ENCODE measurements at regions of chr10 and their contacts with region 1.

Region 1: GRCh38 chr10:110279407-110279986 is 25.2 kb downstream of the SMNDC1 start:
- DNase-seq: peak; percentile 28
- ATAC-seq: peak; percentile 75
- H3K4me3 ChIP-seq: no peak overlapping the region
- H3K27ac ChIP-seq: no peak overlapping the region
- H3K4me1 ChIP-seq: no peaks in the 10 kb centered on the region
- H3K27me3 ChIP-seq: no peaks in the 10 kb centered on the region
- CTCF ChIP-seq: peak; percentile 65 to 77 (median 68); a peak in 5 of 6 replicates
- EP300 ChIP-seq: no peak
- POLR2A ChIP-seq: no peak
- RAD21 ChIP-seq: peak; percentile 87

Region 2: DNA sequence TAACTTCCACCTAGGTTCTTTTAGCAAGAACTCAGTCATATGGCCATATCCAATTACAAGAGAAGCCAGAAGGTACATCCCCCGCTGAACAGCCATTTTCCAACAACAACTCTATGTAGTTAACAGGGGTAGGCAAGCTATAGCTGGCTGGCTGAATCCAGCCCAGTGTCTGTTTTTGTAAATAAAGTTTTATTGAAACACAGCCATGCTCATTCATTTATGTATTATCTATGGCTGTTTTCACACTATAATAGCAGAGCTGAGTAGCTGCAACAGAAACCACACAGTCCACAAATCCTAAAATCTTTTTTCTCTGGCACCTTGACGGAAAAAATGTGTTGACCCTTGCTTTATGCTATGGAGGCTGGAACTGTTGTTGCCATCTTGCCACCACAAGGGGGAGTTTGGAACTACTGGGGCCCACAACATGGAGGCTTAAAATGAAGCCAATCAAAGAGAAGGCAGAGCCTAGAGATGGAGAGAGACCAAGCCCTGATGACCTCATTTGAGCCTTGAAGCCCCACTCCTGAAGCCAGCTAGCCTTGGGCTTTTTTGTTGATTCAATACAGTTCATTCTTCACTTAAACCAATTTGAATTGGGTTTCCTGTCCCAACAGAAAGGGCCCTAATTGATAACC is 322.9 kb before region 1 on chr10:
- CTCF ChIA-PET with region 1: interaction called, 5 read pairs
- POLR2A ChIA-PET with region 1: no interaction called
- RAD21 ChIA-PET with region 1: no interaction called
- SMC1A ChIA-PET with region 1: interaction called, 3 read pairs
- in situ Hi-C with region 1: no loop called
- intact Hi-C with region 1: loop called (anchors 10 kb)
- DNase-seq: no peak
- ATAC-seq: peak; percentile 87
- H3K4me3 ChIP-seq: no peak overlapping the region
- H3K27ac ChIP-seq: peak overlapping the region; percentile 55
- H3K4me1 ChIP-seq: peaks cover 23% of the 10 kb centered on the region
- H3K27me3 ChIP-seq: no peaks in the 10 kb centered on the region
- CTCF ChIP-seq: peak; percentile 57 to 76 (median 67)
- EP300 ChIP-seq: no peak
- POLR2A ChIP-seq: no peak
- RAD21 ChIP-seq: peak; percentile 58

Region 3: GRCh38 chr10:110144507-110144906 is 135.0 kb before region 1 on chr10:
- CTCF ChIA-PET with region 1: interaction called, 105 read pairs
- POLR2A ChIA-PET with region 1: no interaction called
- RAD21 ChIA-PET with region 1: interaction called, 42 read pairs
- SMC1A ChIA-PET with region 1: interaction called, 14 read pairs
- in situ Hi-C with region 1: loop called (anchors 5 kb)
- intact Hi-C with region 1: no loop called
- DNase-seq: no peak
- ATAC-seq: no peak
- H3K4me3 ChIP-seq: no peak overlapping the region
- H3K27ac ChIP-seq: no peak overlapping the region
- H3K4me1 ChIP-seq: no peaks in the 10 kb centered on the region
- H3K27me3 ChIP-seq: peaks cover 0 to 1% of the 10 kb centered on the region in 2 experiments; a peak in 3 of 4 replicates
- CTCF ChIP-seq: no peak
- EP300 ChIP-seq: no peak
- POLR2A ChIP-seq: no peak
- RAD21 ChIP-seq: no peak

Region 4: DNA sequence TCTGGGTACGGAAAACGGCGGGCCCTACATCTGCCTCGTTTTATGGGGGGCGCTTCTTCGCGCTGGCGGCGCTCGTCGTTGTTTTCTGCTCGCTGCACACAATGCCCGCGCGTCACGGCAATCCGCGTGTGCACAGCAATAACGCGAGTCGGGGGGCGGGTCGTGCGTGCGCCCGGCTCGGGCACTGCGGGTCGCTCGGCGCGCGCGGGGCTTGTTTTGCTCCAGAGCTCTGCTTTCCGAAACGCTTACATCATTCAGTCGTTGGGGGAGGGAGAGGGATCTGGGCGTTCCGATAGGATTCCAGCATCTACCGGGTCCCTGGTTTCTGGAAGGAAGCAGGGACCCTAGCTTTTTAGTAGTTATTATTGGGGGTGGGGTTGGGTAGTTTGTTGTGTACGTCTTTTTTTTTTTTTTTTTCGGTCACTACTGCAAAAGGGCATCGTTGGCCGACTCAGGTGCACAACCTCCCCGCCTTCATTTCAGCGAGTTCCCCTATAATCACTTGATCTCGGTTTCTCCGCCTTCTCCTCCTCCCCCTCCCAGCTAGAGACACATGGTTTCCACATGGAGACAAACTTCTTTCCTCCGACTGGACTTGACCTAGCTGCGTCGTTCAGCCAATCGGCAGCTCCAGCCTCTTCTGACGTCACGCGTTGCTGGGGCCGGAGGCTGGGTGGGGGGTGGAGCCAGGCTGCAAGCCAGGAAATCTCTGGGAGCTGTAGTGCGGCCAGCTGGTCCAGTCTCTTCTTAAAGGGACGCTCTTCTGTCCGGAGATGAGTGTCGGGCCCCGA is 68.6 kb before region 1 on chr10:
- CTCF ChIA-PET with region 1: interaction called, 20 read pairs
- POLR2A ChIA-PET with region 1: interaction called, 6 read pairs
- RAD21 ChIA-PET with region 1: interaction called, 34 read pairs
- SMC1A ChIA-PET with region 1: interaction called, 19 read pairs
- in situ Hi-C with region 1: no loop called
- intact Hi-C with region 1: loop called (anchors 2 kb)
- DNase-seq: peak; percentile 90
- ATAC-seq: peak; percentile 87
- H3K4me3 ChIP-seq: peak overlapping the region; percentile 73
- H3K27ac ChIP-seq: no peak overlapping the region
- H3K4me1 ChIP-seq: peaks cover 22% of the 10 kb centered on the region
- H3K27me3 ChIP-seq: peaks cover 4 to 7% of the 10 kb centered on the region in 2 experiments; a peak in 3 of 4 replicates
- CTCF ChIP-seq: no peak
- EP300 ChIP-seq: peak in 1 of 2 experiments; percentile 46; a peak in 1 of 4 replicates
- POLR2A ChIP-seq: peak; percentile 65
- RAD21 ChIP-seq: no peak

Region 5: DNA sequence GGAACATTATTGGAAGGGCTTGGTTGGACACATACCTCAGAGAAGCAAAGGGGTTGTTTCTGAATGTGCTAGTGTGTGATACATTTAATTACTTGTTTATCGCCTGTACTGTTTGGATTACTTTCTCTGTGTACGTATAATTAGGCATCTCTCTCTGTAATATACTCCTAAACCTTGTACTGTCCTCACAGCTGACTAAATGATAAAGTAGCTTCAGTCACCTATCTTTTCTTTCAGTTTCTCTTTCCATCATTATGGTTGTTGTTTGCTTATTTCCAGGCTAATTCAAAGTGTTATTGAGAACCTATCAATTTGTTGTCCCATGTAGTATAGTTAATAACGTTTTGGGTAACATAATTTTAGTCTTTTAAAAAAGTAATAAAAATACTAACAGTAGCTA is 38.1 kb before region 1 on chr10:
- CTCF ChIA-PET with region 1: interaction called, 12 read pairs
- POLR2A ChIA-PET with region 1: no interaction called
- RAD21 ChIA-PET with region 1: no interaction called
- SMC1A ChIA-PET with region 1: interaction called, 5 read pairs
- in situ Hi-C with region 1: no loop called
- intact Hi-C with region 1: loop called (anchors 5 kb)
- DNase-seq: no peak
- ATAC-seq: peak; percentile 28; the same call in 1 of the 3 replicates
- H3K4me3 ChIP-seq: no peak overlapping the region
- H3K27ac ChIP-seq: no peak overlapping the region
- H3K4me1 ChIP-seq: no peaks in the 10 kb centered on the region
- H3K27me3 ChIP-seq: peaks cover 0 to 6% of the 10 kb centered on the region in 2 experiments; a peak in 2 of 4 replicates
- CTCF ChIP-seq: no peak
- EP300 ChIP-seq: no peak
- POLR2A ChIP-seq: no peak
- RAD21 ChIP-seq: no peak

Region 6: GRCh38 chr10:110296966-110297365 is 17.5 kb after region 1 on chr10:
- CTCF ChIA-PET with region 1: interaction called, 7 read pairs
- POLR2A ChIA-PET with region 1: no interaction called
- RAD21 ChIA-PET with region 1: interaction called, 5 read pairs
- SMC1A ChIA-PET with region 1: interaction called, 12 read pairs
- in situ Hi-C with region 1: no loop called
- intact Hi-C with region 1: no loop called
- DNase-seq: no peak
- ATAC-seq: no peak
- H3K4me3 ChIP-seq: no peak overlapping the region
- H3K27ac ChIP-seq: no peak overlapping the region
- H3K4me1 ChIP-seq: no peaks in the 10 kb centered on the region
- H3K27me3 ChIP-seq: no peaks in the 10 kb centered on the region
- CTCF ChIP-seq: no peak
- EP300 ChIP-seq: no peak
- POLR2A ChIP-seq: no peak
- RAD21 ChIP-seq: no peak

Region 7: GRCh38 chr10:110706690-110707098 is 427.2 kb after region 1 on chr10:
- CTCF ChIA-PET with region 1: no interaction called
- POLR2A ChIA-PET with region 1: no interaction called
- RAD21 ChIA-PET with region 1: no interaction called
- SMC1A ChIA-PET with region 1: no interaction called
- in situ Hi-C with region 1: no loop called
- intact Hi-C with region 1: no loop called
- DNase-seq: no peak
- ATAC-seq: no peak
- H3K4me3 ChIP-seq: no peak overlapping the region
- H3K27ac ChIP-seq: no peak overlapping the region
- H3K4me1 ChIP-seq: no peaks in the 10 kb centered on the region
- H3K27me3 ChIP-seq: no peaks in the 10 kb centered on the region
- CTCF ChIP-seq: no peak
- EP300 ChIP-seq: no peak
- POLR2A ChIP-seq: no peak
- RAD21 ChIP-seq: no peak